ENCODE measurements at regions of chr5 and their contacts with region 1.

Region 1: DNA sequence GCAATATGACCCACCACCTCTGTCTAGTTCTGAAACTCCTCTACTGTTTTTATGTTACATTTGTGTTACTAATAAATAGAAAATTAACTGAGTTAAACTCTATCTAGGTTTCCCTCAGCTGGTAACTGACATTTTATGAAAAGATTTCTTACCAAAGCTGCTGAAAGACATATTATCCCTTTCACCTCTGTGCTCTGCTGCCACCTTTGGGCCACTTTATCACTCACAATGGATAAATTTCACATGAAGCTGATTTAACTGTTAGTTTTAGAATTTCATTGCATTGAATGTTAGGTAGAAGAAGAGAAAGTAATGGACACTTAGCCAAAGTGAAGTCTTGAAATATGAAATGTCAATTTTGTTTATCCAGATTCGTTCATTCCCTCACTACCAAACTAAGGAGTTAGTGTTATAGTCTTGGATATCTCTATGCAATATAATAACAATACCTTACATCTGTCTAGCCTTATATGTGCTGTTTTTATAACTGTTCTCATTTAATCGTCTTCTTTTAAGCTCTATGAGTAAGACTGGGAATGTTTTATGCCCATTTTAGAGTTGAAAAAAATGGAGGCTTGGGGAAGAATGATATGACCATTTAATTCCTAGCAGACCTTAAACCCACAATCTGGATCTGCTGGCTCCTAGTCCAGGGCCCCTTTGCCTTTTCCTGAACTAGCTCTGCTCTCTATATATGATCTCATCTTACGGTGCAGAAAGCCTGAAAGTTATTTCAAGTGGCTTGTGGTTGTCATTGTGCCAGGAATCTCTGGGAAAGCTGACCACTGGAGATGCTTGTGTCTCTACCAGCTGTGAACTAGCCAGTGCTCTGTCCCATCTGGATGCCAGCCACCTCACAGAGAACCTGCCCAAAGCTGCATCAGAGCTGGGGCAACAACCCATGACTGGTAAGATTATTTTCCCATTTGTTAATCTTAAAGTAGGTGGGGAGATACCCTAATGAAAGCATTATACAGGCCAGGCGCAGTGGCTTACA is 97.1 kb downstream of the GOLPH3 start:
- DNase-seq: peak; percentile 47
- H3K4me3 Mint-ChIP-seq: no peak overlapping the region
- H3K27ac Mint-ChIP-seq: no peak overlapping the region
- H3K4me1 Mint-ChIP-seq: peaks cover 3% of the 10 kb centered on the region
- H3K27me3 Mint-ChIP-seq: no peaks in the 10 kb centered on the region

Region 2: DNA sequence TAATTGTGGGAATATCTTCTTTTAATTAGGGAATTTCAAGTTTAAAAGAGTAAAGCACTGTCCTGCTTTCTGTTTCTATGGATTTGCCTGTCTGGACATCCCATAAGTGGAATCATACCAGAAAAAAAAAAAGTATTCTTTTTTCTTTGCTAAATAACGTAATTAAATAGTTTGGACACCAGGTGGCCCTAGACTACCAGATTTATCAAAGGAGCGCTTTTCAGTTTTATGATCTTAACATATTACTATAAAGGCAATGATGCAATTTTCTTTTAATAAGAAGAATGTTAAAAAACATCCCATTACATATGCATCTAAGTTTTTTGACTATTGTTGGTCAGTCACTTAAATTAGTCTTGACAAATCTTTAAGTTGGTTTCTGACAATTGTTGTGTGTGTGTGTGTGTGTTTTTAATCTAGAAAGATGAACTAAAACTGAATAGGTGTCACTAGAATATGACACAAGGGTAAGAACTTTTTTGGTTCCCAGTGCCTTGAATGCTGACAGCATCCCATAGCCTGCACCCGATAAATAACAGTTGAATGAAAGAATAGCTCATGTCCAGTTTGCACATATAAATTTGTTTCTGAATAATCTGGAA is 495.4 kb before region 1 on chr5:
- CTCF ChIA-PET with region 1: interaction called, 7 read pairs
- POLR2A ChIA-PET with region 1: no interaction called
- intact Hi-C with region 1: loop called (anchors 1 kb)
- DNase-seq: no peak
- H3K4me3 Mint-ChIP-seq: no peak overlapping the region
- H3K27ac Mint-ChIP-seq: no peak overlapping the region
- H3K4me1 Mint-ChIP-seq: no peaks in the 10 kb centered on the region
- H3K27me3 Mint-ChIP-seq: peaks cover 12% of the 10 kb centered on the region

Region 3: GRCh38 chr5:31702709-31703108 is 374.3 kb before region 1 on chr5:
- CTCF ChIA-PET with region 1: no interaction called
- POLR2A ChIA-PET with region 1: no interaction called
- intact Hi-C with region 1: no loop called
- DNase-seq: no peak
- H3K4me3 Mint-ChIP-seq: no peak overlapping the region
- H3K27ac Mint-ChIP-seq: no peak overlapping the region
- H3K4me1 Mint-ChIP-seq: no peaks in the 10 kb centered on the region
- H3K27me3 Mint-ChIP-seq: no peaks in the 10 kb centered on the region

Region 4: DNA sequence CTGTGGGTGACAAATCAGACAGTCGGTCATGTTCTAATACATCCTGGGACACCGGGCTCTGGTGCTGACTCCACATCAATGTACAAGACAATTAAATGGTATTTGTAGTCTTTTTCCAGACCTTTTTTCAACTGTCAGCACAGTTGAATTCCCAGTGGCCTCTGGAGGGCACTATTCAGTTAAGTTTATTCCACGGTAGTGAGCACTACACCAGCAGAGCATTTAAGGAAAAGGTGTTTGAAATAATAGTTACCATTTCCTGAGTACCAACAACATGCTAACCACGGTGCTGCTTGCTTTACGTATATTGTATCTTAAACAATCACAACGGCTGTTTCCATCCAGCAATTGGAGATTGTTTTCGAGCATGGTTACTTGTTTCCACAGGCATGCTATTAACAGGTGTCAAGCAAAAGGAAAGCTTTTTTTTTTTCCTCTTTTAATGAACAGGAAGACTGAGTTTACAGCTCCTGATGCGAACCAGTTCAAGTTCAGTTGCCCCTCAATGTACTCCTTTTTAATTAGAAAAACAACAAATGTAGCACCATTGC is 251.4 kb before region 1 on chr5:
- CTCF ChIA-PET with region 1: interaction called, 6 read pairs
- POLR2A ChIA-PET with region 1: no interaction called
- intact Hi-C with region 1: loop called (anchors 1 kb)
- DNase-seq: peak; percentile 37
- H3K4me3 Mint-ChIP-seq: no peak overlapping the region
- H3K27ac Mint-ChIP-seq: no peak overlapping the region
- H3K4me1 Mint-ChIP-seq: no peaks in the 10 kb centered on the region
- H3K27me3 Mint-ChIP-seq: peaks cover 7% of the 10 kb centered on the region

Region 5: GRCh38 chr5:32044939-32045338 is 32.1 kb before region 1 on chr5:
- CTCF ChIA-PET with region 1: no interaction called
- POLR2A ChIA-PET with region 1: no interaction called
- intact Hi-C with region 1: no loop called
- DNase-seq: no peak
- H3K4me3 Mint-ChIP-seq: no peak overlapping the region
- H3K27ac Mint-ChIP-seq: no peak overlapping the region
- H3K4me1 Mint-ChIP-seq: no peaks in the 10 kb centered on the region
- H3K27me3 Mint-ChIP-seq: no peaks in the 10 kb centered on the region

Measured in activated CD4-positive, alpha-beta memory T cell treated with anti-CD3 and anti-CD28 coated beads for 36 hours (primary cell).